Activated naive CD4-positive, alpha-beta T cell treated with anti-CD3 and anti-CD28 coated beads for 36 hours (primary cell): ENCODE measurements at regions of chrX and their contacts with region 1.

Region 1: DNA sequence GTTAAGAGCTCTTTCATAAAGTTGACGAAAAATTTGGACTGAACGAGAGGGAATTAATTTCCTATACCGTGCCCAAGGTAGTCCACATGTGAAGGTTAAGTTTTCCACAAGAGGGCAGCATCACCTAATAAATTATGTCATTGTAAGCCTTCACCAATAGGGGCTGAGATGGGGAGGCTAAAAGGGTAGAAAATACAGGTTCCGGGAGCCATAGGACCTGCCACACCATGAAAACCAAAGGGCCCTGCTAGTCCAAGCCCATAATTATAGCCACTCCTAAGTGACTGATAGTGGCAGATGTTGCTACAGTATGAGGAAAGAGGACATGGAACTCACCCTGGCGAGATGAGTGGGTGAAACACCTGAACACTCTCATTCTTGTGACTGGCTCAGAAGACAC is 122.2 kb downstream of the SHROOM4 start:
- DNase-seq: peak; percentile 4
- H3K4me3 Mint-ChIP-seq: no peak overlapping the region
- H3K27ac Mint-ChIP-seq: no peak overlapping the region
- H3K4me1 Mint-ChIP-seq: no peaks in the 10 kb centered on the region
- H3K27me3 Mint-ChIP-seq: peaks cover 5% of the 10 kb centered on the region

Region 2: GRCh38 chrX:50680990-50681389 is 10.8 kb before region 1 on chrX:
- CTCF ChIA-PET with region 1: interaction called, 11 read pairs
- intact Hi-C with region 1: no loop called
- DNase-seq: no peak
- H3K4me3 Mint-ChIP-seq: no peak overlapping the region
- H3K27ac Mint-ChIP-seq: no peak overlapping the region
- H3K4me1 Mint-ChIP-seq: no peaks in the 10 kb centered on the region
- H3K27me3 Mint-ChIP-seq: no peaks in the 10 kb centered on the region

Region 3: GRCh38 chrX:50988649-50989048 is 296.8 kb after region 1 on chrX:
- CTCF ChIA-PET with region 1: no interaction called
- intact Hi-C with region 1: loop called (anchors 2 kb)
- DNase-seq: peak; percentile 36
- H3K4me3 Mint-ChIP-seq: no peak overlapping the region
- H3K27ac Mint-ChIP-seq: no peak overlapping the region
- H3K4me1 Mint-ChIP-seq: no peaks in the 10 kb centered on the region
- H3K27me3 Mint-ChIP-seq: peaks cover 2% of the 10 kb centered on the region

Region 4: GRCh38 chrX:51169410-51169809 is 477.6 kb after region 1 on chrX:
- CTCF ChIA-PET with region 1: no interaction called
- intact Hi-C with region 1: loop called (anchors 2 kb)
- DNase-seq: no peak
- H3K4me3 Mint-ChIP-seq: no peak overlapping the region
- H3K27ac Mint-ChIP-seq: no peak overlapping the region
- H3K4me1 Mint-ChIP-seq: no peaks in the 10 kb centered on the region
- H3K27me3 Mint-ChIP-seq: no peaks in the 10 kb centered on the region

Region 5: GRCh38 chrX:51461053-51462044 is 769.5 kb after region 1 on chrX:
- CTCF ChIA-PET with region 1: no interaction called
- intact Hi-C with region 1: loop called (anchors 5 kb)
- DNase-seq: peak; percentile 17
- H3K4me3 Mint-ChIP-seq: no peak overlapping the region
- H3K27ac Mint-ChIP-seq: no peak overlapping the region
- H3K4me1 Mint-ChIP-seq: no peaks in the 10 kb centered on the region
- H3K27me3 Mint-ChIP-seq: no peaks in the 10 kb centered on the region